HEK293 (cell line): ENCODE measurements at regions of chr1 and their contacts with region 1.

Region 1: GRCh38 chr1:19974822-19975416 is 4.5 kb downstream of the PLA2G2A start:
- H3K4me3 ChIP-seq: no peak overlapping the region
- H3K27ac ChIP-seq: peak overlapping the region; percentile 19; the same call in 1 of the 2 replicates
- H3K4me1 ChIP-seq: peaks cover 5% of the 10 kb centered on the region
- CTCF ChIP-seq: peak; percentile 89

Region 2: DNA sequence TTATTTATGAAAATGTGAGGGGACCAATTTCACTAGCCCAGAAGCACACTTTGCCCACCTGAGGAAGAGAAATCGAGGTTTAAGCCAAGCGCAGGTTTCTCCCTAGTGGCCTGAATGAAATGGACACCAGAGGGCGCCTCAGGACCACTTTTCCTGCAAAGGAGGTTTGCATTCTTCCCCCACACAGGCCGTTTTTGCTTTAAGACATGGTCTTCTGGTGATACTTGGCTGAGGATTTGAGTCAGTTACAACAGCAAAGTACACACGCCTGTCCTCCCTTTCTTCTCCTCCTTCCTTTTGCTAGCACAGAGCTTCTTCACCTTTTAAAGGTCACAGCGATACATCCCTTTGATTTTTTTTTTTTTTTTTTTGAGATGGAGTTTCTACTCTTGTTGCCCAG is 56.9 kb before region 1 on chr1:
- CTCF ChIA-PET with region 1: interaction called, 19 read pairs
- POLR2A ChIA-PET with region 1: no interaction called
- H3K4me3 ChIP-seq: no peak overlapping the region
- H3K27ac ChIP-seq: no peak overlapping the region
- H3K4me1 ChIP-seq: no peaks in the 10 kb centered on the region
- CTCF ChIP-seq: peak; percentile 84

Region 3: DNA sequence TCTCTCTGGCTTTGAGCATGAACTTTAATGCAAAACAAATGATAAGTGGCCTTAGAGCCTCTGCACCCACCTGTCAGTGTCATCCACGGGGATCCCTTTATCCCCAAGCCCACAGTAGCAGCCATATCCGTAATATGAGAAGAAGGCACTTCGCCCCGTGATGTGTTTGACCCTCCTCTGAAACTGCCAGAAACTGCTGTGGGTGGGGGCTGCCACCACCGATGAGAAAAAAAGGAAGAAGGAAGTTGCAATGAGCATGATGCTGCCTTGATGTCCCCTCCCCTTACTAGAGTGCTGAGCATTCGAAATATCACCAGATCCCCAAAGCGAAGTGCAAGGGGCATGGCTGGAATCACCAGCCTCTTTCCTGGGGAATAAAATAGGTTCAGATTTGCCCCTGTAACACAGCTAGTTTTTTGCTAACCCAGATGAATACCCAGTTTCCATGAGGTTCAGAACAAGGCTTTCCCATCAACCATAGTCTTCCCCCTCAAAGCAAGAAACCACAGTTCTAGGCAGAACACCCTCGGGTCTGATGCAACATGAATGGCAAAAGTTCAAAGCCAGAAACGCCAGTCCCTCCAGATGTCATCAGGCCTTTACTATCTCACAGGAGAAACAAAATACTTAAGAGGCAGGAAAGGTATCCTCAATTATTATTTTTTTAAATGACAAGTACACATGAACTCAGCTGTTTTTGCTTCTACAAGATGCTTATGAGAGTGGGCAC is 200.2 kb after region 1 on chr1:
- CTCF ChIA-PET with region 1: no interaction called
- POLR2A ChIA-PET with region 1: no interaction called
- H3K4me3 ChIP-seq: no peak overlapping the region
- H3K27ac ChIP-seq: no peak overlapping the region
- H3K4me1 ChIP-seq: no peaks in the 10 kb centered on the region
- CTCF ChIP-seq: no peak